T-cell (primary cell): ENCODE measurements at regions of chr10 and their contacts with region 1.

Region 1: DNA sequence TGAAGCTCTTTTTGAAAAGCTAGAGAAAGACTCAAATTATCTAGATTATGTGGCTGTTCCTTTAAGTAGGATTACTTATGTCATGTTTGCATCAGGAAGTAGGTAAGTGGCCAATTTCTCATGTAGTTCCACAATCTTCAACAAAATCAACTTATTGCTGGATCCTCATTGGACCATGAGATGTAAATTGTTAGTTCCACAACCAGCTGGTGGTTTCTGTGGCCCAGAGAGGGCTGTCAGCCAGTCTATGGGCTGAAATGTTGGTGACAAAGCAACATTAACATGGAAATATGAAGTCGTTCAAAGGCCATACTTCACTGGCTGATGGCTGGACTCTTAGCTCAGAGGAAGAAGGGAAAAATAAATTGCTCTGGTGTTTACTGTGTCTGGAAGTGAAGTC is 157.9 kb downstream of the PLXDC2 start:
- DNase-seq: peak in 1 of 35 experiments; percentile 15
- ATAC-seq: no peak
- H3K4me3 ChIP-seq: no peak overlapping the region
- H3K4me3 Mint-ChIP-seq: no peak overlapping the region
- H3K27ac ChIP-seq: no peak overlapping the region
- H3K27ac Mint-ChIP-seq: no peak overlapping the region
- H3K4me1 ChIP-seq: no peaks in the 10 kb centered on the region
- H3K4me1 Mint-ChIP-seq: no peaks in the 10 kb centered on the region
- H3K27me3 ChIP-seq: no peaks in the 10 kb centered on the region
- H3K27me3 Mint-ChIP-seq: no peaks in the 10 kb centered on the region

Region 2: DNA sequence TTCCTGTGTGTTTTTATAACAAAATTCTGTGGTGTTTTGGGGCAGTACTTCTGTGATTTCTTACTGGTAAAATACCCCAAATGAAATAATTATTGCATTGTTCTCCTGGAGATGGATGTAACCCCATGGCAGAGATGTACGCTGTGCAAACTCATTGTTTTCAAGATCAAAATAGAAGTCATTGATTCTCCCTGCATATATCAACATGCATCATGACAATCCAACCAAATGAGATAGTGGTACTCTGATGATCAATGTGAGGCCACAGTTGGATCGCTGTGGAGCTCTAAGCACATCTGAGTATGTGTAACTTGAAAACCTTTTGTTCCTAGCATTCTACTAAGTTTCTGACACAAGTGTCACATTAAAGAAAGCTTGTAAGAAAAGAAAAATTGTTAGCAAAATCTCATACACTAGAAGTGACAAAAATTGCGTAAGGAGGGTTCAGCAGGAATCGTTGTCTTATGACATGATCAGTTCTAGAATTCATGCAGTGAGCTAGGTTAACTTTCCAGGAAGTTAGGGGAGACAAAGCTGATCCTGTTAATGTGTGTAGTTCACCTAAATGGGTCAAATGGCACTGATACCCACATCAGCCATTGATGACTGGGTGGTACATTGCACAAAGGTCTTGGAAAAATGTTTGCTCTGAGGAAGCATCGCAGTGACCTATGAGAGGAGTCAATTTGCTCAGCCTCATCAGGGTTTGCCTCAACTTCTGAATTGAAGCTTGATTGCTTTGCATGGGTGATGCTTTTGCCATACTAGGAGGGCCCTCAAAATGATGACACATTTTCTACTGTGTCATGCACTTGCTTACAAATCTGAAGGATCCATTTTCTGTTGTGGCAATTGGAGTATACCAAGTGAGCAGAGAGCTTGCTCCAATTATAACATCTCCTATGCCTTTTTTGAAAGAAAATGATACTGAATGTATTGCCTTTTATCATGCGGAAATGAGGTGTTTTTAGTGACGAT is 12.8 kb before region 1 on chr10:
- CTCF ChIA-PET with region 1: no interaction called
- POLR2A ChIA-PET with region 1: interaction called in 1 of 2 experiments, 11 read pairs
- DNase-seq: no peak
- ATAC-seq: no peak
- H3K4me3 ChIP-seq: no peak overlapping the region
- H3K4me3 Mint-ChIP-seq: no peak overlapping the region
- H3K27ac ChIP-seq: no peak overlapping the region
- H3K27ac Mint-ChIP-seq: no peak overlapping the region
- H3K4me1 ChIP-seq: no peaks in the 10 kb centered on the region
- H3K4me1 Mint-ChIP-seq: no peaks in the 10 kb centered on the region
- H3K27me3 ChIP-seq: no peaks in the 10 kb centered on the region
- H3K27me3 Mint-ChIP-seq: no peaks in the 10 kb centered on the region